ENCODE measurements at regions of chr22 and their contacts with region 1.

Region 1: DNA sequence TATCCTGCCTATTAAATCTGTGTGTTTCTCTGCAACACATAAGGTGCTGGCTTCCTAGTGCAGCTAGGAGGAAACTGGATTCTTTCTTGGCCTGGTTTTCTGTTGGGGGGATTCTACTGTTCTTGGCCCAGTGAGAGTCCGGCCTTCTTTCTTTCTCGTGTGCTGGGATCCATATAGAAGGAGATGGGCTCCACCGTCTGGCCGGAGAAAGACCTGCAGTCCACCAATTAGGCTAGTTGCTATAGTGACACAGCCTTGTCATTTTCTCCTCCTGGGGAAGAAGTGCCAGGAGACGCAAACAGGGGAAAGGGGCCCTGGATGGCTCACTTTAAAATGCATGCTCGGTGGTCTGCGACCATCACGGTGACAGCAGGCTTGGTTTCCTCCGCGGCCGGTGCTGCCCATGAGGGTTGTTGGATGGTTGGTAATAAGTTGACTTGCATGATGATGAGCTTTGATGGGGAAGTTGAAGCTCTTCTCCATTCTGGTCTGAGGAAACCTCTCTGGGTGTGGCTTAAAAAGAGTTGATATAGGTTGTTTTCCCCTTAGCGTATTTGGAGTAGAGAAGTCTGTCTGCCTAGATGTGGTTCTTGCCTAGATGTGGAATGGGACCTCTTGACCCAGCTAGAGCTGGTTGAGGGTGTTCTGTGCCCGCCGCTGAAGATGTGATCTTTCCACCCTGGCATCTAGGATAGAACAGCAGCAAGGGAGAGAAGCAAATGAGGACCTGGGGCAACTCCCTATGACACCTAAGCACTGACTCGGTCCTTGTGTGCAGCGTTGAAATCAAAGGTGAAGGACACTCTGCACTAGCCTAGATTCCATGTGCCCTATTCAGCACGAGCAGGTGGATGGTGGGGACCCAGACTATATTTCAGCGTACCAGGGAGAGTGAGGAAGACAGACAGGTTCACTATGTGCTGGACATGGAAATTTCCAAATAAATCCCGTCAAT is 1335.0 kb downstream of the BRD1 start:
- DNase-seq: peak; percentile 50
- ATAC-seq: peak; percentile 76
- H3K4me3 ChIP-seq: no peak overlapping the region
- H3K27ac ChIP-seq: no peak overlapping the region
- H3K4me1 ChIP-seq: no peaks in the 10 kb centered on the region
- H3K27me3 ChIP-seq: peaks cover 4 to 56% of the 10 kb centered on the region in 2 experiments; a peak in 3 of 5 replicates
- CTCF ChIP-seq: peak; percentile 83
- EP300 ChIP-seq: no peak
- POLR2A ChIP-seq: no peak
- RAD21 ChIP-seq: peak; percentile 59; the same call in 1 of the 2 replicates

Region 2: GRCh38 chr22:47213571-47214230 is 1278.9 kb before region 1 on chr22:
- CTCF ChIA-PET with region 1: interaction called, 6 read pairs
- POLR2A ChIA-PET with region 1: no interaction called
- in situ Hi-C with region 1: loop called (anchors 25 kb)
- intact Hi-C with region 1: loop called (anchors 10 kb)
- DNase-seq: peak; percentile 14
- ATAC-seq: peak; percentile 90
- H3K4me3 ChIP-seq: no peak overlapping the region
- H3K27ac ChIP-seq: no peak overlapping the region
- H3K4me1 ChIP-seq: no peaks in the 10 kb centered on the region
- H3K27me3 ChIP-seq: peaks cover 0 to 7% of the 10 kb centered on the region in 2 experiments; a peak in 1 of 5 replicates
- CTCF ChIP-seq: peak; percentile 79
- EP300 ChIP-seq: no peak
- POLR2A ChIP-seq: no peak
- RAD21 ChIP-seq: peak; percentile 58; the same call in 1 of the 2 replicates

Region 3: GRCh38 chr22:47626428-47627390 is 865.9 kb before region 1 on chr22:
- CTCF ChIA-PET with region 1: interaction called, 3 read pairs
- POLR2A ChIA-PET with region 1: no interaction called
- in situ Hi-C with region 1: loop called (anchors 10 kb)
- intact Hi-C with region 1: no loop called
- DNase-seq: peak; percentile 13
- ATAC-seq: peak; percentile 42
- H3K4me3 ChIP-seq: no peak overlapping the region
- H3K27ac ChIP-seq: no peak overlapping the region
- H3K4me1 ChIP-seq: no peaks in the 10 kb centered on the region
- H3K27me3 ChIP-seq: peaks cover 13 to 44% of the 10 kb centered on the region in 2 experiments
- CTCF ChIP-seq: peak; percentile 24; the same call in 1 of the 2 replicates
- EP300 ChIP-seq: no peak
- POLR2A ChIP-seq: no peak
- RAD21 ChIP-seq: no peak

Region 4: DNA sequence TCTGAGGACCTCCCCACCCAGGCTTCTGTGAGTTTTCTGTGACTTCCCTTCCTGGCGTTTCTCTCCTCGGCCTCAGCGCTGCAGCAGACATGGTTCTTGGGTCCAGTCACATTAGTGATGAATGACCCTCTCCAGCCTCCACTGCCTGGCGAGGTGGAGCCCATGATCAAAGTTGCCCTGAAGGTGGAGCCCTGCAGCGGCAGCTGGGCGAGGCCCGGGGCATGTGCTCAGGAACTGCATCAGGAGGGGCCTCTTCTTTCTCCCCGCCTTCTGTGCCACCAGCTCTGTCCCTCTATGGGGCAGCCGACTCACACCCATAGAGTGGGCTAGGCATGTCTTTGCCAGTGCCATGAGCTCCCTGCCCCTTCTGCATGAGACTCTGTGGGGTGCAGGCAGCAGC is 650.5 kb before region 1 on chr22:
- CTCF ChIA-PET with region 1: no interaction called
- POLR2A ChIA-PET with region 1: no interaction called
- in situ Hi-C with region 1: loop called (anchors 5 kb)
- intact Hi-C with region 1: no loop called
- DNase-seq: no peak
- ATAC-seq: peak; percentile 42; the same call in 2 of the 3 replicates
- H3K4me3 ChIP-seq: no peak overlapping the region
- H3K27ac ChIP-seq: no peak overlapping the region
- H3K4me1 ChIP-seq: no peaks in the 10 kb centered on the region
- H3K27me3 ChIP-seq: peaks cover 2 to 27% of the 10 kb centered on the region in 2 experiments; a peak in 3 of 5 replicates
- CTCF ChIP-seq: peak; percentile 30; the same call in 1 of the 2 replicates
- EP300 ChIP-seq: no peak
- POLR2A ChIP-seq: no peak
- RAD21 ChIP-seq: no peak

Region 5: DNA sequence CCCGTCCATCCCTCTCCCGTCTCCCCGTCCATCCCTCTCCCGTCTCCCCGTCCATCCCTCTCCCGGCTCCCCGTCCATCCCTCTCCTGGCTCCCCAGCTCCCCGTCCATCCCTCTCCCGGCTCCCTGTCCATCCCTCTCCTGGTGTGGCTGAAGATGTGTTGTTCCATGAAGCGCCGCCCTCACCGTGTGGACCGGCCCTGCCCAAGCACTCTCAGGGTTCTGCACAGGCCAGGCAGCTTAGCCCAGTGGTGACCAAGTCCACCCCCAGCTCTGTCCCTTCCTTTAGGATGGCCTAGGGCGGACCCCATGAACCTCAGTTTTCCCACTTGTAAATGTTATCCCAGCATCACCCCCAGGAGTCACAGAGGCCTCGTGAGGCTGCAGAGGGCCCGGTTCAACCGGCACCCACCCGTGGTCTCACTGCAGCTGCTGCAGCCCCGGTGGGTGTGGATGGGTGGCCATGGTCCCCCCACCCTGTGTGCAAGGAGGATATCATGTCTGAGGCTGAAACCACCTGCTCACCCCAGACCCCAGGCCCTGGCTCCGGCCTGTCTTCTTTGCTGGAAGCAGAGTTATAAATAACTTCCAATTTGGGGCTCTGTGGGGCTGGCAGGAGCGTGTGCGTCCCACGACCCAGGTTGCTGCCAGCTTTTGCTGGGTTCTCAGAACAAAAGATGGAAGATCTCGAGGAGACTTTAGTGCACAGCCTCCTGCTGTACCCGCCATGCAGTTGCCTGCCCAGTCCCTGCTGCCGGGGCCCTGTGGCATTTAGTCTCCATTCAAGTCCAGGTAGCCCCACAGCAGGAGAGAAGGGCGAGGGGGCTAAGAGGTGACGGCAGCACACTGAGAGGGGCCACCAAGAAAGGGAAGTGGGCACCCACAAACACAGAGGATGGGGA is 187.3 kb after region 1 on chr22:
- CTCF ChIA-PET with region 1: no interaction called
- POLR2A ChIA-PET with region 1: no interaction called
- in situ Hi-C with region 1: no loop called
- intact Hi-C with region 1: no loop called
- DNase-seq: no peak
- ATAC-seq: no peak
- H3K4me3 ChIP-seq: no peak overlapping the region
- H3K27ac ChIP-seq: no peak overlapping the region
- H3K4me1 ChIP-seq: no peaks in the 10 kb centered on the region
- H3K27me3 ChIP-seq: peaks cover 5 to 12% of the 10 kb centered on the region in 2 experiments; a peak in 4 of 5 replicates
- CTCF ChIP-seq: no peak
- EP300 ChIP-seq: no peak
- POLR2A ChIP-seq: no peak
- RAD21 ChIP-seq: no peak

Measured in HepG2 (cell line).